ENCODE measurements at regions of chr6 and their contacts with region 1.

Region 1: DNA sequence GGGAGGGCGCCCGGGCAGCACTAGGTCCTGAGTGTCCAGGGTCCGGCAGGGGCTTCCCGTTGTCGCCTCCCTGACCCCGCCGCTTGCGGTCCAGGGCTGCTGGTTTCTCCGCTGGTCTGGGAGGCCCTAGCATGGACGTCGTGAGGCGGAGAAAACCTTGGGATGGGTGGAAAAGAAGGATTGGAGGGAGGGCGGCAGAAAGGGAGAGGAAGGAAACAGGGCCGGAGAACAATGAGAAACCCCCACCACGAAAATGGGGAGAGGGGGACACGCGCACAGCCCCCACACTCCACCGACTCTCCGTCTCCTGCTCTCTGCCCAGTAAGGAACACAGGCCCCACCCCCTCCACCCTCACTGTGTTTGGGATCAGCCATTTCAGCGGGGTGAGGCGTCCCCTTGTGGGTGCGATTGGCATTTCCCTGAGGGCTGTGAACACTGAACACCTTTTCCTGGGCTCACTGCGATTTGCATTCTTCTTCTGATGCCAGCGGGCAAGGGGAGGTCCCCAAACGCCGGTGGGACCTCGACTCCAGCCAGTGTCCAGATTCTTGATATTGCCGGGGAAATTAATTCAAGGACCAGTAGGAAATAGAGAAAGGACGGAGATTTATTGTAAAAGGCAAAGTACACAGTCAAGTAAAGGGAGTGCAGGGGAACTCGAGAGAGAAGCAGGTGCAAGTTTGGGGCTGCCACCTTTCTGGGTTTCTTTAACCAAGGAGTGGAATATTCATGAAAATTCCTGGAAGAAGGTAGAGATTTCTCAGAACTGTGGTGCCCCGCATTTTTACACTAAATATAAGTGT is 3.3 kb upstream of the RAET1G start:
- DNase-seq: peak; percentile 62 to 96 (median 78)

Region 2: GRCh38 chr6:149723771-149724417 is 202.3 kb before region 1 on chr6:
- intact Hi-C with region 1: loop called (anchors 5 kb)
- DNase-seq: peak in 6 of 10 donors; percentile 24 to 90 (median 37)

Region 3: DNA sequence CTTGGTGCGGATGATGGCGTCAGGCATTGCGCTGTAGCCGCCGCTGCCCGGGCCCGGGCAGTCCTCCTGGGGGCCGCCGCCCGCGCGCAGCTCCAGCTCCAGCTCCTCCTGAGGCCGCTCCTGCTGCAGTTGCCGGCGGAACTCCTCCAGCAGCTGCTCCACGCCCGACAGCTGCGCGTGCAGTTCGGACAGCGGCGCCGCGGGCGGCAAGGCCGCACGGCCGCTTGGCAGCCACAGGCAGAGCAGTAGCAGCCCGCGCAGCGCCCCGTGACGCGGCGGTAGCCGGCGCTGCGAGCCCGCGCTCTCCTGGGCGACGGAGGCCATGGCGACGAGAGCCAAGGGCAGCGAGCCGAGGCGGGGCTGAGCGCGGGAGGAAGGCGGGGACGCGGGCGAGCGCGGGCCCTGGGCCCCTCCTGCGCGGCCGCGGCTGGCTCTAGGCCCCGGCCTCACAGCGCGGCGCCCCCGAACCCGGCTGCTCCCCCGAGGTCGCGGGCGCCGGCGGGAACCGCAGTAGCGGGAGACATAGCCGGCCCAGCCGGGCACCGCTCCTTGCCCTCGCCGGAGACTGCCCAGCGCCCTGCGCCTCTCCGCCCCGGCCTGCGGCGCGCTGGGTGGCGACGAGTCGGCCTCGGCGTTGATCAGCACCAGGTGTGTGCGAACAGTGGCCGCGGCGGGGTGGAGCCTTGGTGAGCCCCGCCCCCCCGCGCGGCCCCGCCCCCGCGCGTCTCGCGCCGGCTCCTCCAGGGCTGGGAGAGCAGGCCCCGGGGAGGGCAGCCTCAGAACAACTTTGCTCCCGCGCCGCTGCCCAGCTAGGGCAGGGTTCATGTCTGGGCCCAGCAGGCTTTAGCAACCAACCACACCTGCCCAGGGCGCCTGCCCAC is 62.2 kb before region 1 on chr6 and contains the start of gene LRP11:
- intact Hi-C with region 1: loop called (anchors 2 kb)
- DNase-seq: peak; percentile 71 to 98 (median 88)

Measured in posterior cingulate gyrus (tissue), 11 donors.